Posterior vena cava (tissue), 2 donors: ENCODE measurements at regions of chr1 and their contacts with region 1.

Region 1: DNA sequence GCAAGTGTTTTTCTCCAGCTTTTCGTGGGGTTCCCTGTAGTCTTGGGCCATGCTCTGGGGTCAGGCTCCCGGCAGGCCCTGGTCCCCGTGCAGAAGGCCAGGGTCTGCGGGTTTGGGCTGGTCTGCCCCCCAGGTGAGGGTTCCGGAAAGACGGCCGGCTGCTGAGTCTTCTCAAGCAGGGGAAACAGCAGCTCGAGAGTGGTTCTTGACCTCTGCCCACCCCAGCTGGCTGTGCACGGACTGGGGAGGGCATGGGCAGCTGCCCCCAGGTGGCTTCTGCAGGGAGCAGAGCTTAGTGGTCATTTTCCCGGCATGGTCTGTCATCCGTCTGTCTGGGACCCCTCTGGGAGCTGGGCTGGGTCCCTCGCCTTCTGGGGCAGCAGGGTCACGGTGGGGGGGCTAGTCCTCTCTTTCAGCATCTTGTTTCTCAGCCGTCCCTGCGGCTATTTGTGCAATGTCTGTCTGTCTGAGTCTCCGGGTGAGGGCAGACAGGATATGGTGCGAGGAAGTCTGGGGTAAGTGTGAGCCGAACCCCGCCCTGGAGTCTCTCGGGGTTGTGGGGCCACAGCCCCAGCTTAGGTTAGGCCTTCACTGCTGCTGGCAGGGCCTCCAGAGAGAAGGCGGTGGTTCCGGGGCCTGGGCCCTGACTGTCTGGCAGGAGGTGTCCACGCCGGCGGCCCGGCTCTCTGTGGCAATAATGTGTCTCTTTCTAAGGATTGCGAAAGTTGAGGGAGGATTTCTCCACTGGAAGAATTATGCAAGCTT is 6.1 kb downstream of the SKI start:
- DNase-seq: peak; percentile 98

Region 2: DNA sequence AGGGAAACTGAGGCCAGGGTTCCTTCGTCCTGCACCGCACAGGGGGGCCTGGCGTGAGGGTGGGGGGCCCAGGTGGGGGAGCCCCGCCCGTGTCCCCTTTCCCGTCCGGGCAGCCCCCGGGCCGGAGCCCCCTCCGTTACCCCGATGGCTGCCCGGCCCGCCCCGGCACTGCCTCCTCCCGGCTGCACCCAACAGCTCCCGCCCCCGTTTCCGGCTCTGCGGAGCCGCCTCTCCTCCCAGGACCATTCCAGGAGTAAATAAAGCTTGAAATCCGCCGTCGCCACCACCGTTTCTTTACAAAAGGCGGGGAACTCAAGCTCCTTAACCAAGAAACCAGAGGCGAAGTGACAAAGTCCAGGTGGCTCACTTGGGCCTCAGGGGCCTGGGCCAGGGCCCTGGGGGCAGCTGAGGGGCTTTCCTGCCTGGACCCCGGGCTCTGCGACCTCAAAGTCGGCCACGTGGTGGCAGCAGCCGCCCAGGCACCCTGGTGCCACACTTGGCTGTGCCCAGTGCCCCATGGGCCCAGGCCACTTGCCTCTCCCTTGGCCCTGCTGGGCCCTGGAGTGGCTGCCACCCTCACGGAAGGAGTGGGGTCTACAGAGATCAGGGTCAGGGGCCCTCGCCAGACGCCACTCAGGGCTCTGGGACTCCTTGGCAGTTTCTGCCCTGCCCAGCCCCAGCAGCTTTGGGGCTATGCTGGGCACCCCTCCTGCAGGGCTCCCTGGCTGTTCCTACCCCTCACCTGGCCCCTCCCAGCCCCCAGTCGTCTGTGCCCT is 39.1 kb before region 1 on chr1:
- intact Hi-C with region 1: loop called in 1 of 2 experiments (anchors 5 kb)
- DNase-seq: peak; percentile 97

Region 3: DNA sequence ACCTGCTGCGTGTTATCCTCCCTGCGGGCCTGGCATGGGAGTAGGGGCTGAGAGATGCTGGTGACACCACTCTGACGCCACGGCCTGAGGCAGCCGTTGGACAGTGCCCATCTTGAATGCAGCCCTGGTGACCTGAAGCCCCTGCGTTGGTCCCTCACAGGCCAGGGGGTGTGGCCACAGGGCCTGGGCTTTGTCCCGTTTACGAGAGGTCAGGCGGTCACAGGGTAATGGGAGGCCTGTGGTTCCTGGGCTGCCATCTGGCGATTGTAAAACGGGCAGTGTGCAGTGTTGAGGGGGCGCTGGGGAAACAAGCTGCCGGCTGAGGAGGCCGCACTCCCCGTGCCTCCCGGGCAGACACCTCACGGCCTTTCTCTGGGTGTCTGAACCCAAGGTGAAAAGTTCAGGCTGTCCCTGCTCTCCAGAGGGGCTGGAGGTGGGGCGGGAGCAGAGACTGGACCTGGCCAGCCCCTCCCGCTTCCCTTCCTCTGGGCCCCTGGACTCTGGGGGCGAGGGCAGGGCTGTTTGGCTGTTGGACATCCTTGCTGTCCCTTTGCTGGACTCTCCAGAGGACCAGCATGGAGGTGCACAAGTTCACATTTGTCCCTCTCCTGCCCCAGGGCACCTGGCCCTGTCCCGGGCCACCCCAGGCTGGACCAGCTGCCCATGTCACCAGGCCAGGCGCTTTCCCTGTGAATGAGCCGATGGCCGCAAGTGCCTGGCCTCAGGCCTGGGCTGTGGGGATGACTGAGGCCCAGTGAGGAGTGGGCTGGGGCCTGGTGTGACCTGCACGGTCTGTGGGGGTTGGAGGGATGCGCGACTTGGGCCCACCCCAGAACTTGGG is 36.3 kb after region 1 on chr1:
- intact Hi-C with region 1: loop called in 1 of 2 experiments (anchors 5 kb)
- DNase-seq: no peak

Region 4: DNA sequence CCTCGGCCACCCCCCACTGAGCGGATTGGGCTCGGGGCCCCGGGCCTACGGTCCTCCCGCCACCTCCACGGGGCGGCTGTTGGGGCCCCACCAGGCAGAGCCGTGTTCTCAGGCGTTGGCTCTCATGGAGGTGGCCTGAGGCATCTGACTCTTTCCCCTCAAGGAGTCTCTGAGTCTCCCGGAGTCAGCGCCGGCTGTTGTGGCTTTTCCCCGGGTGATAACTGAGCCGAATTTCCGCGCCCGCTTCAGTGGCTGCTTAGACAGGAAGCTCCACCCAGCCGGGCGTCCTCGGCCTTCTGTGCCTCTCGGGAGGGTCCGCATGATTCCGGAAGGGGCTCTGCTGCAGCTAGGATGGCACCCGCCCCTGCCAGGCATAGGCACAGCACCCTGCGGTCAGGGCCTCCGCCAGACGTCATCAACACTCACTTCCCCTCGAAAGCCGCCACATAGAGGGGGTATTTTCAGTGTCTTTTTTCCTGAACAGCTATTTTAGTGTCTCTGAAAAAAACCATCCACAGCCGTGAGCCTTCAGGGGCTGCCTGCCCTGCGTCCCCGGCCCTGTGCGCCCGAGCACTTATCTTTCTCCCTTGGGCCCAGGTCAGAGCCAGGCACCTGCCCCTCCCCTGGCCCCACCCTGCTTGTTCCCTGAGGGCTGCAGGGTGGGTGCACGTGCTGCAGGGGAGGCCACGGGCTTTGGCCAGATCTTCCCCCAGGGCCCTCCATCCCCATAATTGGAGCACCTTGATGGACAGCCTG is 66.8 kb after region 1 on chr1:
- intact Hi-C with region 1: loop called in 1 of 2 experiments (anchors 5 kb)
- DNase-seq: peak; percentile 97

Region 5: DNA sequence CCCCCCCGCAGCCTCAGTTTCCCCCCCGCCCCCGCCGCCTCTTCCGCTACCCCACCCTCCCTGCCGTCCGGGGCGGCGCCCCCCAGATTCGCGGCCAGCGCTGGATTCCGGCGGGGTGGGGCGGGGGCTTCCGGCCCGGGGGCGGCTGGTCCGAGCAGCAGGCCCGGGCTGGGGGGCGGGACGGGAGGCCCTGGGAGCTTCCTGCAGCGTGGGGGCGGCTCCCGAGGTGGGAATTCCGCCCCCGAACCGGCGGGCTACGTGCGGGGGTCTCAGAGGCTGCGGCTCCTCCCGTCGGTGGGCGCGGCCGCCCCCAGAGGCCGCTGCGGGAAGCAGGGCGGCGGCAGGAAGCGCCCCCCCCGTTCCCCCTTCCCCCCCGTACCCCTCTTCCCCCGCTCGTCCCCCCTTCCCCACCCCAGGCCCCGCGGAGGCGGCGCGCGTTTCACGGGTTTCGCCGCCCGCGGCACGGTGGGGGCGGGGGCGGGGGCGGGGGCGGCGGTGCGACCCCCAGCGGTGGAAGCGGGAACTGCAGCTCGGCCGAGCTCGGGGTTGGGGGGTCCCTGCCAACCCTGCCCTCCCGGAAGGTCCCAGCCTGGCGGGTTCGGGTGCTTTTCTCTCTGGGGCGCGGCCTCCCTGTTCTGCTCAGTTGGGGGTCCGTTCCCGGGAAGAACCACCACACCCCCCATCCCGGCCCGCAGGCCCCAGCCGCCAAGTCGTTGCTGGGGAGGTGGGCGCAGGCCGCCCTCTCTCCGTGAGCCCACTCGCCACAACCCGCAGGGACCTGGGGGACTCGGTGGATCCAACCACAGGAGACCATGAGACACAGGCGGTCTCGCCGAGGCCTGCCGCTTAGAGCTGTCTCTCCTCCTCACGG is 80.9 kb after region 1 on chr1:
- intact Hi-C with region 1: loop called (anchors 5 kb)
- DNase-seq: no peak